ENCODE measurements at regions of chr3 and their contacts with region 1.

Region 1: GRCh38 chr3:170387950-170388349 is 30.4 kb downstream of the SKIL start:
- DNase-seq: no peak
- ATAC-seq: no peak
- H3K4me3 ChIP-seq: no peak overlapping the region
- H3K27ac ChIP-seq: no peak overlapping the region
- H3K4me1 ChIP-seq: no peaks in the 10 kb centered on the region
- H3K27me3 ChIP-seq: no peaks in the 10 kb centered on the region
- CTCF ChIP-seq: no peak; the same call in 1 of the 2 replicates

Region 2: GRCh38 chr3:168714609-168715240 is 1673.2 kb before region 1 on chr3:
- CTCF ChIA-PET with region 1: no interaction called
- POLR2A ChIA-PET with region 1: interaction called, 15 read pairs
- intact Hi-C with region 1: no loop called
- DNase-seq: no peak
- ATAC-seq: no peak
- H3K4me3 ChIP-seq: no peak overlapping the region
- H3K27ac ChIP-seq: no peak overlapping the region
- H3K4me1 ChIP-seq: no peaks in the 10 kb centered on the region
- H3K27me3 ChIP-seq: no peaks in the 10 kb centered on the region
- CTCF ChIP-seq: no peak

Region 3: DNA sequence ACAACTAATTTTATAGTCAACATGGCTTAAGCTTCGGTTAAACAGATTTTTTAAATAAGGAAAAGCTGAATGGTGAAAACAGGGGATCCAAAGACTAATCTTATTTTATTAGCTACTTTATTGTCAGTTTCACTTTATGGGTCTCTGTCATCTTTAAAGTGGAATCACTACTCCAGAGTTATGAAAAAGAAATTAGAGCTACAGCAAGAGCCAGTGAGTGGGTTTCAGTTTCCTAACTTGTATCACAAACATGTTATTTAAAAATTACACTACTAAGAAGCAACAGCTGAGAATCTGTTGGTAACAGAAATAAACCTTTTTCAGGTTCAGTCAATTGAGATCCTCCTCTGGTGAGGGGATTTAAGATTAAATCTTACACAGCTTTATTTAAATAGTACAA is 216.4 kb before region 1 on chr3:
- CTCF ChIA-PET with region 1: no interaction called
- POLR2A ChIA-PET with region 1: no interaction called
- intact Hi-C with region 1: no loop called
- DNase-seq: no peak
- ATAC-seq: no peak
- H3K4me3 ChIP-seq: no peak overlapping the region
- H3K27ac ChIP-seq: no peak overlapping the region
- H3K4me1 ChIP-seq: no peaks in the 10 kb centered on the region
- H3K27me3 ChIP-seq: no peaks in the 10 kb centered on the region
- CTCF ChIP-seq: no peak